Dorsolateral prefrontal cortex (tissue), 120 donors: ENCODE measurements at regions of chr3 and their contacts with region 1.

Region 1: GRCh38 chr3:160399125-160400029 is at the starts of genes IFT80 and SMC4:
- DNase-seq: peak; percentile 86 to 97 (median 95)
- H3K4me3 ChIP-seq: peak within 1 kb of the TSS; percentile 54 to 97 (median 85)
- H3K27ac ChIP-seq: peak within 1 kb of the TSS; percentile 79 to 97 (median 93)
- H3K27me3 ChIP-seq: peaks cover 0 to 20% (median 0%) of the 10 kb centered on the region in 45 donors
- CTCF ChIP-seq: peak in 26 of 56 donors; percentile 4 to 56 (median 20)
- total RNA-seq, gene IFT80: 30.1 to 114 (median 63.1) TPM
- total RNA-seq, gene SMC4: 4.6 to 19.0 (median 10.7) TPM

Region 2: GRCh38 chr3:160027541-160028195 is 371.7 kb before region 1 on chr3:
- intact Hi-C with region 1: loop called (anchors 5 to 10 kb)
- DNase-seq: no peak
- H3K4me3 ChIP-seq: no peak overlapping the region
- H3K27ac ChIP-seq: no peak overlapping the region
- H3K27me3 ChIP-seq: no peaks in the 10 kb centered on the region
- CTCF ChIP-seq: no peak

Region 3: DNA sequence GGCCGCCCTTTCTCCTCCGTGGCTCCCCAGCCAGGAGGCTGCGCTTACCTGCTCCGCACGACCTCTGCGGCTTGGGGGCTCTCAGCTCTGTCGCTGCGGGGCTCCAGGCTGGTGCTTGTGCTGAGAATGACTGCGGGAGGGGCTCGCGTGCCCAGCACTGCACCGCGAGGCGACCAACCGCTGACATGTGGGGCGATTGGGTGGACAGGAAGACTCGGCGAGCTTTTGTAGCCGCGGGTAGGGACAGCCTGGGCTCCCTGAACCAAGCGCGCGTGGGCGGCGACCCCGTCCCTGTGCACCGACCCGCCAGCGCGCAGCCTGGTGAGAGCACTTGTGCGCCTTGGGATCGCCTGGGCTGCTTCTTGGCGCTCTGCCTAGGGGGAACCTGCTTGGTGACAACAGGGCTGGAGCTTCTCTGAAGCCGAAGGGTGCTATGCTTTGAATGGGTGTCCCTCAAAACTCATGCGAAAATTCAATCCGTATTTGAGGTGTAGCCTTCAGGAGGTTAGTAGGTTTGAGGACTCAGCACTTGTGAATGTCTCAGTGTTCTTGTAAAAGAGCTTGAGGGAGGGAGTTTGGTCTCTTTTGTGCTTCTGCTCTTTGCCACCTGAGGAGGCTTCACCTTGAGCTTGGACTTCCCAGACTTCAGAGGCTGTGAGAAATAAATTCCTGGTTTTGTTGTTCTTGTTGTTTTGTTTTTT is 360.4 kb before region 1 on chr3:
- intact Hi-C with region 1: loop called in 1 of 2 experiments (anchors 10 kb)
- DNase-seq: peak in 7 of 10 donors; percentile 28 to 57 (median 54)
- H3K4me3 ChIP-seq: peak overlapping the region; percentile 31 to 72 (median 54)
- H3K27ac ChIP-seq: peak overlapping the region in 25 of 59 donors; percentile 6 to 78 (median 58)
- H3K27me3 ChIP-seq: peaks cover 0 to 19% (median 0%) of the 10 kb centered on the region in 45 donors
- CTCF ChIP-seq: no peak

Region 4: DNA sequence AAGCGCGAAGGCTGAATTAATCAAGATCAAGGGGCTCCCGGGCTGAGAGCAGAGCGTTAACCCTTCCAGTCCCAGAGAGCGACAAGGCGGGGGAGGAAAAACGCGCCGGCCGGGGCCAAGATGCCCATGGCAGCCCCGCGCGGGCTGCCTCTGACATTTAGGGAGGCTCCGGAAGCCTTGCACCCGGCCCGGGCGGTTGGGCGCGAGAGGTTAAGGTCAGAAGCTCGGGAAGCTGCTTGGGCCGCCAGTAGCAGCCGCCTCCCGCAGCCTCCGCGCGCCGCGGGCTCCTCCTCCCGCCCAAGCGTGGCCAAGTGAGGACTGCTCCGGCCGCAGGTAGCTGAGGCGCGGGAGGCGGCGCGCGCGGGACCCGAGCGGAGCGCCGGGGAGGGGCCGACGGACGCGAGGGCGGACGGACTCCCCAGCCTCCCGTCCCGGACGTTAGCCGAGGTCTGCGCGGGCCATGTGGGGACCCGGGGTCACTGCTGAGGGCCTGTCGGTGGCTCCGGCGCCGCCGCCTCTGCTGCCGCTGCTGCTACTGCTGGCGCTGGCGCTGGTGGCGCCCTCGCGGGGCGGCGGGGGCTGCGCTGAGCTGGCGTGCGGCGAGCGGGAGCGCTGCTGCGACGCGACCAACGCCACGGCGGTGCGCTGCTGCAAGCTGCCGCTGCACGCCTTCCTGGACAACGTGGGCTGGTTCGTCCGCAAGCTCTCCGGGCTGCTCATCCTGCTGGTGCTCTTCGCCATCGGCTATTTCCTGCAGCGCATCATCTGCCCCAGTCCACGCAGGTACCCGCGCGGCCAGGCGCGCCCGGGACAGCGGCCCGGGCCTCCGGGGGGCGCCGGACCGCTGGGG is 174.0 kb before region 1 on chr3 and contains the start of gene C3orf80:
- intact Hi-C with region 1: loop called in 1 of 2 experiments (anchors 10 kb)
- DNase-seq: peak in 9 of 10 donors; percentile 34 to 79 (median 60)
- H3K4me3 ChIP-seq: peak within 1 kb of the TSS; percentile 47 to 80 (median 69)
- H3K27ac ChIP-seq: peak within 1 kb of the TSS in 57 of 59 donors; percentile 8 to 86 (median 73)
- H3K27me3 ChIP-seq: peaks cover 0 to 28% (median 0%) of the 10 kb centered on the region in 45 donors
- CTCF ChIP-seq: peak in 34 of 56 donors; percentile 5 to 60 (median 30)
- total RNA-seq, gene C3orf80: 6.4 to 36.0 (median 19.3) TPM

Region 5: DNA sequence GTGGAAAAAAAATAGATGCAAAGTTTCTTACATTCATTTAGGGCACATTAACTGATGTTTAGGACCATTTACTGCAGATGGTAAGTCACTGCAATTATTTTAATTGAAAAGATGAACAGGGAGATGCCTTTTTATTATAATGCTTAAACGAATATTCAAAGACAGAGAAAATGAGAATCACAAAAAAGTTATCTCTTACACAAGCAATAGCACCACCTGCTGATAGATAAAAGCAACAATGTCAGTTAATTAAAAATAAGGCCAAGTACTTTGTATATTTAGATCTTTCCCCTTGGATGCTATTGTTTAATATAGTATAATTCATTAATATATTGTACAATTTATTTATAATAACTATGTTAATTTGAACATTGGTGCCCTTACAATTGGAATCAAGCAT is 56.2 kb before region 1 on chr3:
- intact Hi-C with region 1: no loop called
- DNase-seq: no peak
- H3K4me3 ChIP-seq: no peak overlapping the region
- H3K27ac ChIP-seq: no peak overlapping the region
- H3K27me3 ChIP-seq: no peaks in the 10 kb centered on the region
- CTCF ChIP-seq: peak; percentile 14 to 77 (median 56)

Region 6: DNA sequence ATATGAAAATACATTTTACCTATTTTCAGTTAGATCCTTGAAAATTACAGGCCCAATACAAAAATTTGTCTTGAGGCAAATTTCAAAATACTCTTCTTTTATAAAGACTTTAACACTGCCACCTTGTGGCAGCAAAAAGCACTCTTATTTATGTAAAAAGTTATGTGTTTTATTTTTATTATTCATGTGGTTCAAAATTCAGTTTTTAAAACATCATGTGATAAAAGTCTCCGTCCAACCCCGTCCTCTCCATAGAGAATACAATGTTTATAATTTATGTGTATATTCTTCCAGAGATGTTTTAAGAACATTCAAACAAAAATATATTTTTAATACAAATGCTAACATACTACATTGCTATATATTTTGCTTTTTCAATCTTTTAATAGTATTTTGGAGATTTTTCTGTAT is 87.1 kb after region 1 on chr3:
- intact Hi-C with region 1: loop called in 1 of 2 experiments (anchors 5 kb)
- DNase-seq: no peak
- H3K4me3 ChIP-seq: peak overlapping the region in 32 of 59 donors; percentile 14 to 68 (median 48)
- H3K27ac ChIP-seq: peak overlapping the region in 29 of 59 donors; percentile 35 to 86 (median 73)
- H3K27me3 ChIP-seq: no peaks in the 10 kb centered on the region
- CTCF ChIP-seq: peak; percentile 55 to 92 (median 78)

Region 7: DNA sequence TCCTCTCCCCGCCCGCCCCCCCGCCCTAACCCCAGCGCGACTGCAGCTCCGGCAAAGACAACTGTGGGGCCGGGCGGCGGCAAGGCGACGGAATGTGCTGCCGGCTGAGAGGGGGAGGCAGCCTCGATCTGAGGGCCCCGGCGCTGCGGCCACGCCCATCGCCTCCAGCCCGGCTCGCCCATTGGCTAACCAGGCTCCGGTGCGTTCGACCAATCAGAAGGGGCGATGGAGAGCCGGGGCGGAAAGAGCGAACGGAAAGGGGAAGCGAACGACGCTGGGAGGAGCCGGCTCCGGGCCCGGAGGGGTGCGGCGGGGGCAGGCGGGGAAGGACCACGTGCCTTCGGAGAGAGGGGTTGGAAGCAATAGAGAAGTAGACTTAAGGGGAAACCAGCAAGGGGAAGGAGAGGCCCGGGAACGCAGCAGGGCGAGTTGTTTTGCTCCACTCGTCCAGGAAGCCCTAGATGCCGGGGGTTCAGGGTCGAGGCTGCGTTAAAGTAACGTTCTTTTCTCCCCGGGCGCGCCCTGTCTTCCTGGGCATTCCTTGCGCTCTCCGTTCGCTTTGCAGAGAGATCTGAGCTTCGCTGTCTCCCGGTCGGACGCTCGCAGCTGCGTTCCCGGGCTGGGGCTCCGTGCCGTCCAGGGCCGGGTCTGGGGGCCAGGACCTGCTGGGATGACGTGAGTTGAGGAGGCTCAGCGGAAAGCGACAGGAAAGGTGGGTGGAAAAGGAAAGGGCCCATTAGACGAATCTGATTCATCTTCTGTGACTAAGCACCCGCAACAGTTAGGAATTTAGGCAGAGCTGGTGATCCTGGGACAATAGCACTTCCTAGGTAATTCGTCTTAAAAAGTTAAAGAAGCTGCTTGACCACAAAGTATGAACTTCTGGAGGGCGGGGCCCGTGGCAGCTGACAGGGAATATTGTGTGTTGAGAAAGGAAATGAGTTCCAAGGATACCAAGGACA is 166.3 kb after region 1 on chr3 and contains the start of gene KPNA4:
- intact Hi-C with region 1: loop called (anchors 2 to 10 kb)
- DNase-seq: peak; percentile 92 to 98 (median 96)
- H3K4me3 ChIP-seq: peak within 1 kb of the TSS; percentile 68 to 96 (median 85)
- H3K27ac ChIP-seq: peak within 1 kb of the TSS; percentile 66 to 98 (median 90)
- H3K27me3 ChIP-seq: no peaks in the 10 kb centered on the region
- CTCF ChIP-seq: peak in 14 of 56 donors; percentile 3 to 38 (median 20)
- total RNA-seq, gene KPNA4: 39.4 to 90.3 (median 59.5) TPM